Activated CD4-positive, alpha-beta T cell treated with anti-CD3 and anti-CD28 coated beads for 36 hours (primary cell): ENCODE measurements at regions of chr19 and their contacts with region 1.

Region 1: DNA sequence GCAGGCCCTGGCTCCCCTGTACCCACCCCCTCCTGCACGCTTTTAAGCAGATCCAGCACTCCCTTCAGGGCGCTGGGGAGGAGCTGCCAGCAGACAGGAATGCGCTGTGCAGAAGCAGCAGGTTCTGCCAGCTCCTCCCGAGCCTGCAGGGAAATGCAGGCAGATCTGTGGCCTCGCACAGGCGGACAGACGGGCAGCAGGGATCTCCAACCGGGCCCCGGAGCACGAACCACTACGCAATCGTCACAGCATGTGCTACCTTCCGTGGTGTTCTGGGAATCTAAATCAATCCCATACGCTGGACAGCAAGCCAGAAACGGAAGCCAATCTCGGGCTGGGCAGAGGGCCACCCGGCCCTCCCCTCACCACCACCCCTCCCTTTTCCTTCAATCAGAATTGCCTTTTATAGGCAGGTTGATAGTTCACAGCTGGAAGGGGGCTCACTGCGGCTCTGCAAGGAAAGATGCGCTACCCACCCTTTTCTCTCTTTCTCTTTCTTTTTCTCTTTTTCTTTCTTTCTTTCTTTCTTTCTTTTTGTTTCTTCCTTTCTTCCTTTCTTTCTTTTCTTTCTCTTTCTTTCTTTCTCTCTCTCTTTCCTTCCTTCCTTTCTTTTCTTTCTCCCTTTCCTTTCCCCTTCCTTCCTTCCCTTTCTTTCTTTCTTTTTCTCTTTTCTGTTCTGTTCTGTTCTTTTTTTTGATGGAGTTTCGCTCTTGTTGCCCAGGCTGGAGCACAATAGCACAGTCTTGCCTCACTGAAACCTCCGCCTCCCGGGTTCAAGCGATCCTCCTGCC is 99.9 kb downstream of the GNG7 start:
- DNase-seq: no peak
- ATAC-seq: no peak
- H3K4me3 Mint-ChIP-seq: no peak overlapping the region
- H3K27ac Mint-ChIP-seq: no peak overlapping the region
- H3K4me1 Mint-ChIP-seq: peaks cover 24% of the 10 kb centered on the region
- H3K27me3 Mint-ChIP-seq: peaks cover 8% of the 10 kb centered on the region

Region 2: GRCh38 chr19:2207991-2208860 is 394.4 kb before region 1 on chr19:
- CTCF ChIA-PET with region 1: no interaction called
- POLR2A ChIA-PET with region 1: no interaction called
- intact Hi-C with region 1: no loop called
- DNase-seq: peak; percentile 41
- ATAC-seq: no peak
- H3K4me3 Mint-ChIP-seq: no peak overlapping the region
- H3K27ac Mint-ChIP-seq: no peak overlapping the region
- H3K4me1 Mint-ChIP-seq: no peaks in the 10 kb centered on the region
- H3K27me3 Mint-ChIP-seq: no peaks in the 10 kb centered on the region

Region 3: DNA sequence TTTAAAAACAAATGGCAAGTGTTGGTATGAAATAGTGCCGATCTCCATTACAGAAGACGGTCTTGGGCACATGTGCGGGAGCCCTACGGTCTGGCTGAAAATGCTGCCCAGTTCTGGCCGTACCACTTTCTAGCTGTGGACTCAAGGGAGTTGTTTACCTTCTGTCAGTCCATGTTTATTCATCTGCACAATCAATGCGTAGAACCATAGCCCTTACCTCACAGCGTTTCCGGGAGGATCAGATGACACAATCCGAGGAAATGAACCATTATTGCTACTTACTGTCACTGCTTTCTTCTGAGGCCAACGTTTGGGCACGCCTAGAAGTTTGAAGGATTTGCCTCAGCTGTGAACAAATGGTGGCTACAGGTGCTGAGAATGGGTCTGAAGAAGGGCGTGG is 95.5 kb before region 1 on chr19:
- CTCF ChIA-PET with region 1: no interaction called
- POLR2A ChIA-PET with region 1: no interaction called
- intact Hi-C with region 1: loop called in 1 of 2 experiments (anchors 1 kb)
- DNase-seq: peak; percentile 57
- ATAC-seq: peak; percentile 68
- H3K4me3 Mint-ChIP-seq: no peak overlapping the region
- H3K27ac Mint-ChIP-seq: peak overlapping the region; percentile 72
- H3K4me1 Mint-ChIP-seq: peaks cover 26% of the 10 kb centered on the region
- H3K27me3 Mint-ChIP-seq: peaks cover 4% of the 10 kb centered on the region

Region 4: DNA sequence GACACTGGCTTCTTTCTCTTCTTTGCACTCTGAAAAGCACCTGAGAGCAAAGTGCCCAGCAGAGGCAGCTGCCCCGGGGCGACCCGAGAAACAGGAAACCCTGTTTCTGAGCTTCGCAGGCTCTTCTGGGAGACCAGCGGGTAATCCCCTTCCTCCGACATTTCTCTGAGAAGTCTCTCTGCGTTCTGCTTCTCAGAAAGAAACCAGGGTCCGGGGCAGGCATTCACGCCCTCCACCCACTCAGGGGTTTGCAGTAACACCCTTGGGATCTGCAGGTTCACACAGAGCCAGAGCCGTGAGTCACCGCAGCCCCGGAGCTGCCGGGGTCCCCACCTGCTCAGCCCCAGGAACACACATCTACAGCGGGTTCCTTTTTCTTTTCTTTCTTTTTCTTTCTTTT is 40.7 kb before region 1 on chr19:
- CTCF ChIA-PET with region 1: interaction called, 4 read pairs
- POLR2A ChIA-PET with region 1: no interaction called
- intact Hi-C with region 1: loop called in 1 of 2 experiments (anchors 2 kb)
- DNase-seq: peak; percentile 88
- ATAC-seq: peak; percentile 92
- H3K4me3 Mint-ChIP-seq: peak overlapping the region; percentile 69
- H3K27ac Mint-ChIP-seq: peak overlapping the region; percentile 85
- H3K4me1 Mint-ChIP-seq: peaks cover 23% of the 10 kb centered on the region
- H3K27me3 Mint-ChIP-seq: peaks cover 2% of the 10 kb centered on the region

Region 5: GRCh38 chr19:2578901-2579677 is 23.5 kb before region 1 on chr19:
- CTCF ChIA-PET with region 1: no interaction called
- POLR2A ChIA-PET with region 1: interaction called, 3 read pairs
- intact Hi-C with region 1: loop called in 1 of 2 experiments (anchors 2 kb)
- DNase-seq: peak; percentile 81
- ATAC-seq: peak; percentile 69
- H3K4me3 Mint-ChIP-seq: no peak overlapping the region
- H3K27ac Mint-ChIP-seq: no peak overlapping the region
- H3K4me1 Mint-ChIP-seq: no peaks in the 10 kb centered on the region
- H3K27me3 Mint-ChIP-seq: peaks cover 8% of the 10 kb centered on the region

Region 6: DNA sequence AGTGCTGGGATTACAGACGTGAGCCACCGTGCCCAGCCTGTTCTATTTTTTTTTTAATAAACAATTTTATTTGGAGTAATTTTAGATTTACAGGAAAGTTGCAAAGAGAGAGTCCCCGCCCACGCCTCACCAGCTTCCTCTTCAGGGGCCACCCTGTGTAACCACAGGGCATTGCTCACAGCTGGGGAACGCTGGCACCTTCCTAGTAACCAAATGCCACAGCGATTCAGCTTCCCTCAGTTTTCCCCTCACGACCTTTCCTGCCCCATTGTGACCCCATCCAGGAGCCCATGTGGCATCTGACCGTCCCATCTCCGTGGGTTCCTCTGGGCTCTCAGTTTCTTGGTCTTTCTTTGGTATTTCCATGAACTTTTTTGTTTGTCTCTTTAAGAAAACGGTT is 16.0 kb after region 1 on chr19:
- CTCF ChIA-PET with region 1: interaction called, 14 read pairs
- POLR2A ChIA-PET with region 1: interaction called, 10 read pairs
- intact Hi-C with region 1: loop called in 1 of 2 experiments (anchors 1 kb)
- DNase-seq: peak; percentile 94
- ATAC-seq: no peak
- H3K4me3 Mint-ChIP-seq: peak overlapping the region; percentile 46
- H3K27ac Mint-ChIP-seq: peak overlapping the region; percentile 77
- H3K4me1 Mint-ChIP-seq: peaks cover 64% of the 10 kb centered on the region
- H3K27me3 Mint-ChIP-seq: no peaks in the 10 kb centered on the region